ENCODE measurements at regions of chr2 and their contacts with region 1.

Region 1: DNA sequence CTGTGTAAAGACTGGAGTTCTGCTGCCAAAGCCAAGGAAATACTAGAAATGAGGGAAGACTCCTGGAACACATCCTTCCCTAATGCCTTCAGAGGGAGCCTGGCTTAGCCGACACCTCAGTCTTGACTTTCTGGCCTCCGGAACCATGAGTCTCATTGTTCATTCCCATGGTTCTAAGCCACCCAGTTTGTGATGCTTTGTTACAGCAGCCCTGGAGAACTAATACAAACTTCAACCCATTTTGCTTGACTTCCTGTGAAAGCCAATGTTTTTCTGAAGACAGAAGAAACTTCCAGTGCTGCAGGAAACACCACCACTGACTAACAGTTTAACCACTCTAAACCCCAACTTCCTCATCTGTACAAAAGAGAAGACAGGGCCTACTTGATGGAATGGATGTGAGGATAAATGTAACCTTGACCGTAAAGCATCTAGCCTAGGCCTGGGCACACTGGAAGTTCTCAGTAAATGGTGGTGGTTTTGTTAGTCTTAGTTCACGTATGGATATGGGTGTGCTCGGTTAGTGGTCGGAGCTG is 85.9 kb upstream of the RFX8 start:
- DNase-seq: peak; percentile 10
- H3K4me3 Mint-ChIP-seq: peak overlapping the region; percentile 15
- H3K27ac Mint-ChIP-seq: peak overlapping the region; percentile 89
- H3K4me1 Mint-ChIP-seq: peaks cover 41% of the 10 kb centered on the region
- H3K27me3 Mint-ChIP-seq: peaks cover 2% of the 10 kb centered on the region

Region 2: GRCh38 chr2:101571951-101572350 is 11.1 kb after region 1 on chr2:
- CTCF ChIA-PET with region 1: interaction called, 11 read pairs
- POLR2A ChIA-PET with region 1: no interaction called
- DNase-seq: no peak
- H3K4me3 Mint-ChIP-seq: no peak overlapping the region
- H3K27ac Mint-ChIP-seq: no peak overlapping the region
- H3K4me1 Mint-ChIP-seq: peaks cover 50% of the 10 kb centered on the region
- H3K27me3 Mint-ChIP-seq: no peaks in the 10 kb centered on the region

Region 3: DNA sequence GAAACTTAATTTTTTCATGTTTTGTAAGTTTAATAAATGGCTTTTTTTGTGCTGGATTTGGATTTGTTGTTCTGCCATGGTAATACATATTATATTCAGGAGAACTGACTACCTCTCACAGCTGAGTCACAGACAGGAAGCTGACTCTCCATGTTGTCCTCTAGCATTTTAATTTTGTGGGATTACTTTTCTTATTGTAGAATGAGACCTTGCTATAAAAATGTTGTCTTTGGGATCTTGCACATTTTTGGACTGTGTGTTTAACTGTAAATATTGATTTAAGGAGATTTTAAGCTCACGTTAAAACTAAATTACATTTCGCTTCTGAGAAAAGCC is 185.5 kb after region 1 on chr2:
- CTCF ChIA-PET with region 1: no interaction called
- POLR2A ChIA-PET with region 1: no interaction called
- DNase-seq: no peak
- H3K4me3 Mint-ChIP-seq: no peak overlapping the region
- H3K27ac Mint-ChIP-seq: no peak overlapping the region
- H3K4me1 Mint-ChIP-seq: peaks cover 57% of the 10 kb centered on the region
- H3K27me3 Mint-ChIP-seq: no peaks in the 10 kb centered on the region